Naive thymus-derived CD4-positive, alpha-beta T cell (primary cell): ENCODE measurements at regions of chr17 and their contacts with region 1.

Region 1: GRCh38 chr17:48160177-48161081 is 52.9 kb downstream of the SNX11 start:
- DNase-seq: no peak
- ATAC-seq: no peak
- H3K4me3 ChIP-seq: no peak overlapping the region
- H3K4me3 Mint-ChIP-seq: no peak overlapping the region
- H3K27ac ChIP-seq: no peak overlapping the region
- H3K27ac Mint-ChIP-seq: peak overlapping the region in 3 of 9 donors; percentile 8 to 16 (median 15)
- H3K4me1 ChIP-seq: no peaks in the 10 kb centered on the region
- H3K4me1 Mint-ChIP-seq: peaks cover 0 to 19% (median 5%) of the 10 kb centered on the region in 7 donors
- H3K27me3 ChIP-seq: no peaks in the 10 kb centered on the region
- H3K27me3 Mint-ChIP-seq: no peaks in the 10 kb centered on the region

Region 2: DNA sequence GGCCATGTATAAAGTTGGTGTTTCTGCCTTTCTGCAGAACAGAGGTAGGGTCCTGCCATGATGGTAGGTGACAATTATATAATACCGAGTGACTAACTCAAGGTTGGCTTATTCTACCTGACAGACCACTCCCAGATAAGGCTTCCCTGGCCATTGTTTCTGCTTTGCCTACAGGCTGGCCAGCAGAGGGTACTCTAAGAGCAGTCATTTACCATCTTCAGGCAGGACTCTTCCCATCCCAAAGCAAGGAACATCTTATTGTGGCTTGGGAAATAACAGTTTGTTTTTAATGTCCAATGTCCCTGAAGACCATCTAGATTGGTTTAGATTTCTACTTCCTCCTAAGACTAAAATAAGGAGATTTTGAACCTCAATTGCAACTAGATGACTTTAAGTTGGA is 21.2 kb after region 1 on chr17:
- CTCF ChIA-PET with region 1: no interaction called
- POLR2A ChIA-PET with region 1: no interaction called
- intact Hi-C with region 1: loop called in 1 of 2 experiments (anchors 2 kb)
- DNase-seq: no peak
- ATAC-seq: no peak
- H3K4me3 ChIP-seq: no peak overlapping the region
- H3K4me3 Mint-ChIP-seq: no peak overlapping the region
- H3K27ac ChIP-seq: no peak overlapping the region
- H3K27ac Mint-ChIP-seq: no peak overlapping the region
- H3K4me1 ChIP-seq: no peaks in the 10 kb centered on the region
- H3K4me1 Mint-ChIP-seq: peaks cover 0 to 33% (median 12%) of the 10 kb centered on the region in 7 donors
- H3K27me3 ChIP-seq: no peaks in the 10 kb centered on the region
- H3K27me3 Mint-ChIP-seq: no peaks in the 10 kb centered on the region